ENCODE measurements at regions of chr4 and their contacts with region 1.

Region 1: DNA sequence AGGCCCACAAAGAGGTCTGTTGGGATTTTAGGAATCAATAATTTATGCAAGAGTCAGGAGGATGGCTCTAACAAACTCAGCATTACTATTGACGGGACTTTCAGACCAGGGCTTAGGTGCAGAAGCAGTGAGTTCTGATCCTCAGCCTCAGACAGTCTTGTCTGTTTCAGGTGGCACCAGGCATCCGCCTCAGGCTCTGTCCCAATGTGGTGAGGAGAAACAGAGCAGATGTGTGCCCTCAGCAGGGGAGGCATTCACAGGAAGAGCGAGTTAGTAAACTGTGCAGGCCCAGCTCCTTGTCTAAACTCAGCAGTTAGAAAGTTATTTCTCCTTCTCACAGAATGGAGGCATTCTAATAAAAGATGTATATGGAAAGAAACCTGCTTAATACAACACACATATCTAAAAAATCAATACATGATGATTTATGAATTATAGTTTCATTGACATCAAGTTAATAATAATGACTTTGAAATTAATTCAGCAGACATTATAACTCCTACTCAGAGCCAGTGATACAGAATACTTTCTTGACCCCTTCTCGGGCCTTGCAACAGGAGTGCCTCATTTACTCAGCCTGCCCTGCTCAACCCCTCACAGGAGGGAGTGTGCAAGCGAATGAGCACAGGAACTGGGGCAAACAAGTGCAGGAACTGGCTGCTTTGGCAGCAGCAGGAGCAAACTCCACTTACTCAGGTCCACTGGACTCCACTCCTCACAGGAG is 202.8 kb upstream of the SMIM31 start:
- DNase-seq: no peak
- H3K4me3 ChIP-seq: no peak overlapping the region
- H3K27ac ChIP-seq: no peak overlapping the region
- H3K4me1 ChIP-seq: no peaks in the 10 kb centered on the region
- H3K27me3 ChIP-seq: no peaks in the 10 kb centered on the region
- CTCF ChIP-seq: no peak

Region 2: GRCh38 chr4:164531336-164531735 is 19.8 kb before region 1 on chr4:
- CTCF ChIA-PET with region 1: no interaction called
- POLR2A ChIA-PET with region 1: interaction called, 13 read pairs
- intact Hi-C with region 1: no loop called
- DNase-seq: no peak
- H3K4me3 ChIP-seq: no peak overlapping the region
- H3K27ac ChIP-seq: no peak overlapping the region
- H3K4me1 ChIP-seq: no peaks in the 10 kb centered on the region
- H3K27me3 ChIP-seq: no peaks in the 10 kb centered on the region
- CTCF ChIP-seq: no peak